ENCODE measurements at regions of chr2 and their contacts with region 1.

Region 1: GRCh38 chr2:178414266-178415247 is 36.4 kb downstream of the PRKRA start:
- DNase-seq: peak; percentile 34 to 86 (median 61)
- ATAC-seq: peak; percentile 62 to 69 (median 66)
- H3K4me3 ChIP-seq: peak overlapping the region; percentile 59 to 94
- H3K4me3 Mint-ChIP-seq: peak overlapping the region; percentile 79 to 98 (median 90)
- H3K27ac ChIP-seq: peak overlapping the region; percentile 78
- H3K27ac Mint-ChIP-seq: peak overlapping the region; percentile 56 to 76
- H3K4me1 ChIP-seq: peaks cover 11 to 15% of the 10 kb centered on the region in 2 experiments
- H3K4me1 Mint-ChIP-seq: peaks cover 21 to 32% (median 22%) of the 10 kb centered on the region in 3 donors
- H3K27me3 ChIP-seq: no peaks in the 10 kb centered on the region
- H3K27me3 Mint-ChIP-seq: no peaks in the 10 kb centered on the region

Region 2: GRCh38 chr2:178112202-178113152 is 302.1 kb before region 1 on chr2 and contains the start of gene RBM45:
- CTCF ChIA-PET with region 1: interaction called in 1 of 2 experiments, 11 read pairs
- POLR2A ChIA-PET with region 1: interaction called in 1 of 2 experiments, 3 read pairs
- DNase-seq: peak; percentile 52 to 90 (median 74)
- ATAC-seq: peak; percentile 92 to 93 (median 92)
- H3K4me3 ChIP-seq: peak within 1 kb of the TSS; percentile 83 to 98
- H3K4me3 Mint-ChIP-seq: peak within 1 kb of the TSS; percentile 87 to 95 (median 93)
- H3K27ac ChIP-seq: peak within 1 kb of the TSS; percentile 38
- H3K27ac Mint-ChIP-seq: peak within 1 kb of the TSS; percentile 74 to 89
- H3K4me1 ChIP-seq: peaks cover 2 to 14% of the 10 kb centered on the region in 2 experiments
- H3K4me1 Mint-ChIP-seq: peaks cover 33 to 44% (median 41%) of the 10 kb centered on the region in 3 donors
- H3K27me3 ChIP-seq: peaks cover 0 to 7% of the 10 kb centered on the region in 2 experiments
- H3K27me3 Mint-ChIP-seq: no peaks in the 10 kb centered on the region
- total RNA-seq, gene RBM45: 9.2 to 17.7 (median 15.6) TPM

Region 3: GRCh38 chr2:178397002-178397605 is 17.5 kb before region 1 on chr2:
- CTCF ChIA-PET with region 1: interaction called, 33 to 61 read pairs
- POLR2A ChIA-PET with region 1: interaction called, 4 to 7 read pairs
- DNase-seq: peak in 4 of 35 experiments; percentile 3 to 70 (median 8)
- ATAC-seq: peak in 3 of 4 experiments; percentile 47 to 63 (median 48)
- H3K4me3 ChIP-seq: no peak overlapping the region
- H3K4me3 Mint-ChIP-seq: no peak overlapping the region
- H3K27ac ChIP-seq: no peak overlapping the region
- H3K27ac Mint-ChIP-seq: no peak overlapping the region
- H3K4me1 ChIP-seq: no peaks in the 10 kb centered on the region
- H3K4me1 Mint-ChIP-seq: peaks cover 0 to 2% (median 0%) of the 10 kb centered on the region in 3 donors
- H3K27me3 ChIP-seq: no peaks in the 10 kb centered on the region
- H3K27me3 Mint-ChIP-seq: peaks cover 3% of the 10 kb centered on the region in 2 donors

Region 4: GRCh38 chr2:178404368-178404767 is 10.2 kb before region 1 on chr2:
- CTCF ChIA-PET with region 1: interaction called, 33 to 61 read pairs
- POLR2A ChIA-PET with region 1: interaction called in 1 of 2 experiments, 3 read pairs
- DNase-seq: no peak
- ATAC-seq: peak in 1 of 4 experiments; percentile 30
- H3K4me3 ChIP-seq: no peak overlapping the region
- H3K4me3 Mint-ChIP-seq: no peak overlapping the region
- H3K27ac ChIP-seq: no peak overlapping the region
- H3K27ac Mint-ChIP-seq: no peak overlapping the region
- H3K4me1 ChIP-seq: peaks cover 0 to 3% of the 10 kb centered on the region in 2 experiments
- H3K4me1 Mint-ChIP-seq: peaks cover 0 to 7% (median 6%) of the 10 kb centered on the region in 3 donors
- H3K27me3 ChIP-seq: no peaks in the 10 kb centered on the region
- H3K27me3 Mint-ChIP-seq: peaks cover 5 to 6% of the 10 kb centered on the region in 2 donors

Region 5: GRCh38 chr2:178450774-178451525 is 36.4 kb after region 1 on chr2 and contains the starts of genes PJVK and PRKRA:
- CTCF ChIA-PET with region 1: interaction called, 3 to 13 read pairs
- POLR2A ChIA-PET with region 1: interaction called in 1 of 2 experiments, 13 read pairs
- DNase-seq: peak; percentile 88 to 97 (median 92)
- ATAC-seq: peak; percentile 84 to 95 (median 90)
- H3K4me3 ChIP-seq: peak within 1 kb of the TSS; percentile 80 to 95
- H3K4me3 Mint-ChIP-seq: peak within 1 kb of the TSS; percentile 86 to 88 (median 87)
- H3K27ac ChIP-seq: peak within 1 kb of the TSS; percentile 91
- H3K27ac Mint-ChIP-seq: peak within 1 kb of the TSS; percentile 86 to 91
- H3K4me1 ChIP-seq: peaks cover 10 to 27% of the 10 kb centered on the region in 2 experiments
- H3K4me1 Mint-ChIP-seq: peaks cover 25 to 33% (median 32%) of the 10 kb centered on the region in 3 donors
- H3K27me3 ChIP-seq: no peaks in the 10 kb centered on the region
- H3K27me3 Mint-ChIP-seq: no peaks in the 10 kb centered on the region
- total RNA-seq, gene PJVK: 1.8 to 5.2 (median 4.3) TPM
- total RNA-seq, gene PRKRA: 49.4 to 98.7 (median 52.7) TPM

Measured in T-cell (primary cell).